ENCODE measurements at regions of chr9 and their contacts with region 1.

Region 1: DNA sequence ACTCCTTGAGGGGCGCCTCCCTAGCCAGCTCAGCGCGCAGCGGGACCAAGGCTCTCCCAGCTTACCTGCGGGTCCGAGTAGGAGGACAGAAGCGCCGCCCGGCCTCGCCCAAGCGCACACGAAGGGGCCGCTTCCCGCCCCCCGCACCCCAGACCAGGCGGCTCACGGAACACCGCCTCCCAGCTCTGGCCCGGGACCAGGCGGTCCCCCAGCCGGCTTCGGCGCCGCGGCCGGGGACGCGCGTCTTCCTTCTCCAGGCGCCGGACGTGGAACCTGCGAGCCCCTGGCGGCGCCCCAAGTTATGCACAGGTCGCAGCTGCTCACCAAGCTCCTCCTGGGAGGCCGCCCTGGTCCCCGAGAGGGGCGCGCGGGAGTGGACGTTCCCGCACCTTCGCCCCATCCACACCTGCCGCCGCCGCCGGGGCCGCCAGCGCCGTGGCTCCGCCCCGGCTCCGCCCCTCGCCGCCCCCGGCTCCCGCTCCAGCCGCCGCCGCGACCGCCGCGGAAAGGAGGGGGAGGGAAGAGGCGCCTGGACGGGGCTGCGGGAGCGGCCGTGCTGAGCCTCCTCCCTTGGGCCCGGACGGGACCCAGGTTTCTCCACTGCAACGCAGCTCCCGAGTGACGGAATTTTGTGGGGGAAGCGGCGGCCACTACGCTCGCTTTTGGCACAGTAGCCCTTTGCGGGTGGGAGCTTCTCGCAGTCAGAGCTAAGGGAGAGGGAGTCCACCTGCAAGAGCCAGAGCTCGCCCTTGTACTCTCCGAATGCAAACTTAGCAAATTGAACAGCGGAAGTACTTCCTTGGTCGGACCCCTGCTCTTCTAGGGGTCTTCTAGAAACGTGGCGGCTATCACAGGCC is 77.5 kb upstream of the IFNE start:
- DNase-seq: peak; percentile 15 to 74 (median 56)
- ATAC-seq: peak; percentile 82
- H3K4me3 ChIP-seq: peak overlapping the region; percentile 57 to 78
- H3K4me3 Mint-ChIP-seq: peak overlapping the region; percentile 98
- H3K27ac ChIP-seq: peak overlapping the region in 1 of 2 experiments; percentile 33
- H3K27ac Mint-ChIP-seq: peak overlapping the region; percentile 73
- H3K4me1 ChIP-seq: peaks cover 22% of the 10 kb centered on the region
- H3K4me1 Mint-ChIP-seq: peaks cover 40% of the 10 kb centered on the region
- H3K27me3 ChIP-seq: peaks cover 0 to 24% of the 10 kb centered on the region in 2 experiments
- H3K27me3 Mint-ChIP-seq: peaks cover 17% of the 10 kb centered on the region
- CTCF ChIP-seq: peak; percentile 19

Region 2: GRCh38 chr9:21096172-21096900 is 463.3 kb before region 1 on chr9:
- CTCF ChIA-PET with region 1: no interaction called
- POLR2A ChIA-PET with region 1: no interaction called
- intact Hi-C with region 1: loop called in 1 of 2 experiments (anchors 10 kb)
- DNase-seq: peak in 5 of 9 experiments; percentile 13 to 90 (median 48)
- ATAC-seq: peak; percentile 97
- H3K4me3 ChIP-seq: peak overlapping the region; percentile 16 to 36
- H3K4me3 Mint-ChIP-seq: peak overlapping the region; percentile 74
- H3K27ac ChIP-seq: peak overlapping the region in 1 of 2 experiments; percentile 84
- H3K27ac Mint-ChIP-seq: peak overlapping the region; percentile 83
- H3K4me1 ChIP-seq: peaks cover 15% of the 10 kb centered on the region
- H3K4me1 Mint-ChIP-seq: peaks cover 36% of the 10 kb centered on the region
- H3K27me3 ChIP-seq: no peaks in the 10 kb centered on the region
- H3K27me3 Mint-ChIP-seq: no peaks in the 10 kb centered on the region
- CTCF ChIP-seq: no peak

Region 3: GRCh38 chr9:21381448-21382339 is 178.0 kb before region 1 on chr9:
- CTCF ChIA-PET with region 1: no interaction called
- POLR2A ChIA-PET with region 1: no interaction called
- intact Hi-C with region 1: no loop called
- DNase-seq: peak in 2 of 9 experiments; percentile 36 to 60
- ATAC-seq: peak; percentile 76
- H3K4me3 ChIP-seq: no peak overlapping the region
- H3K4me3 Mint-ChIP-seq: peak overlapping the region; percentile 27
- H3K27ac ChIP-seq: no peak overlapping the region
- H3K27ac Mint-ChIP-seq: no peak overlapping the region
- H3K4me1 ChIP-seq: no peaks in the 10 kb centered on the region
- H3K4me1 Mint-ChIP-seq: peaks cover 7% of the 10 kb centered on the region
- H3K27me3 ChIP-seq: no peaks in the 10 kb centered on the region
- H3K27me3 Mint-ChIP-seq: peaks cover 39% of the 10 kb centered on the region
- CTCF ChIP-seq: no peak

Region 4: DNA sequence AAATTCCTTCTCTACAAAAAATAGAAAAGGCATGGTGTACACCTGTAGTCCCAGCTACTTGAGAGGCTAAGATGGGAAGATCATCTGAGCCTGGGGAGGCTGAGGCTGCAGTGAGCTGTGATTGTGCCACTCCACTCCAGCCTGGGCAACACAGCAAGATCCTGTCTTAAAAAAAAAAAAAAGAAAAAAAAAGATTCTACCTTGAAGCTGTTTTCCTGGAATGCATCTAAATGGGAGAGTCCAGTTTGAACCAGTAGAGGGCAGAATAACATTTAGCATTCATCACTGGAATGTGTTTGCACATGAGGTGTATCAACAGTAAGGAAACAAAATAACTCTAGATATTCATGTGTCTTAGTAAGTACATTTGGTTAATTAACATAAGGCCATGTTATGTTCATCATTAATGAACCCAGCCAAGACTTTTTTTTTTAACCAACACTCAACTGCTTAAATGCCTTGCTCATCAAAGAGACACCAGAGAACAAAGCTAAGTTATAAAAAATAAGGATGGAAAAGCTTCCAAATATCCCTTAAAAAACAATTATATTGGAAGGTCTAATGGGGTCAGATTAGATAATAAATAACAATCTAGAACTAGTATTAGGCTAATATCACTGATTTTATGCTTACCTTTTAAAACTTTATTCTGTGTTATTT is 93.7 kb before region 1 on chr9:
- CTCF ChIA-PET with region 1: no interaction called
- POLR2A ChIA-PET with region 1: no interaction called
- intact Hi-C with region 1: loop called in 1 of 2 experiments (anchors 2 kb)
- DNase-seq: peak in 2 of 9 experiments; percentile 68 to 75
- ATAC-seq: peak; percentile 77
- H3K4me3 ChIP-seq: no peak overlapping the region
- H3K4me3 Mint-ChIP-seq: no peak overlapping the region
- H3K27ac ChIP-seq: no peak overlapping the region
- H3K27ac Mint-ChIP-seq: no peak overlapping the region
- H3K4me1 ChIP-seq: no peaks in the 10 kb centered on the region
- H3K4me1 Mint-ChIP-seq: peaks cover 2% of the 10 kb centered on the region
- H3K27me3 ChIP-seq: no peaks in the 10 kb centered on the region
- H3K27me3 Mint-ChIP-seq: no peaks in the 10 kb centered on the region
- CTCF ChIP-seq: peak; percentile 71

Region 5: GRCh38 chr9:21570643-21571275 is 11.1 kb after region 1 on chr9:
- CTCF ChIA-PET with region 1: interaction called, 22 read pairs
- POLR2A ChIA-PET with region 1: interaction called, 13 read pairs
- intact Hi-C with region 1: loop called in 1 of 2 experiments (anchors 1 kb)
- DNase-seq: no peak
- ATAC-seq: no peak
- H3K4me3 ChIP-seq: no peak overlapping the region
- H3K4me3 Mint-ChIP-seq: no peak overlapping the region
- H3K27ac ChIP-seq: no peak overlapping the region
- H3K27ac Mint-ChIP-seq: no peak overlapping the region
- H3K4me1 ChIP-seq: no peaks in the 10 kb centered on the region
- H3K4me1 Mint-ChIP-seq: peaks cover 4% of the 10 kb centered on the region
- H3K27me3 ChIP-seq: peaks cover 0 to 2% of the 10 kb centered on the region in 2 experiments
- H3K27me3 Mint-ChIP-seq: no peaks in the 10 kb centered on the region
- CTCF ChIP-seq: no peak

Region 6: GRCh38 chr9:21591221-21592062 is 31.8 kb after region 1 on chr9:
- CTCF ChIA-PET with region 1: no interaction called
- POLR2A ChIA-PET with region 1: no interaction called
- intact Hi-C with region 1: loop called in 1 of 2 experiments (anchors 5 kb)
- DNase-seq: peak in 4 of 9 experiments; percentile 13 to 29 (median 24)
- ATAC-seq: no peak
- H3K4me3 ChIP-seq: no peak overlapping the region
- H3K4me3 Mint-ChIP-seq: no peak overlapping the region
- H3K27ac ChIP-seq: no peak overlapping the region
- H3K27ac Mint-ChIP-seq: no peak overlapping the region
- H3K4me1 ChIP-seq: peaks cover 5% of the 10 kb centered on the region
- H3K4me1 Mint-ChIP-seq: peaks cover 10% of the 10 kb centered on the region
- H3K27me3 ChIP-seq: no peaks in the 10 kb centered on the region
- H3K27me3 Mint-ChIP-seq: no peaks in the 10 kb centered on the region
- CTCF ChIP-seq: no peak

Region 7: DNA sequence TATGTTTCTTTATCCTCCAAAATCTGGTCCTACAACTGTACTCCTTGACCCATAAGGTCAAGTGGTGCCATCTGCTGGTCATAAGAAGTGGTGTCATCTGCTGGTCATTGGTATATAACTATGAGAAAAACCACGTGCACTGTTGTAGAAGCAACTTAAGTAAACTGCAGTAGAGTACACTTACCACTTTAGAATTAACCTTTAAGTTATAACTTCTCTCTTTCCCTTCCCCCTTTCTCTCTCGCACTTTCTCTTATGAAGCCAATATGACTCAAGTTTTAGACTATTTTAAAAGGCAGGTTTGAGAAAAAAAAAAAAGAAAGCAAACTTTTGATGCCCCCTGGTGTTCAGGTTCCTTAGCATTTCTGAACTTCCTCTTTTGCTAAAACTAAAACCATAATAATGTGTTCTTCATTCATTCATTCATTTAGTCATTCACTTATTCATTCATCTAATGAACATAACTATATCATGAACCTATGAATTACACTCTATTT is 229.9 kb after region 1 on chr9:
- CTCF ChIA-PET with region 1: interaction called, 6 read pairs
- POLR2A ChIA-PET with region 1: no interaction called
- intact Hi-C with region 1: loop called in 1 of 2 experiments (anchors 5 kb)
- DNase-seq: peak in 6 of 9 experiments; percentile 46 to 89 (median 62)
- ATAC-seq: peak; percentile 94
- H3K4me3 ChIP-seq: peak overlapping the region; percentile 18 to 33
- H3K4me3 Mint-ChIP-seq: peak overlapping the region; percentile 80
- H3K27ac ChIP-seq: no peak overlapping the region
- H3K27ac Mint-ChIP-seq: peak overlapping the region; percentile 71
- H3K4me1 ChIP-seq: no peaks in the 10 kb centered on the region
- H3K4me1 Mint-ChIP-seq: no peaks in the 10 kb centered on the region
- H3K27me3 ChIP-seq: no peaks in the 10 kb centered on the region
- H3K27me3 Mint-ChIP-seq: peaks cover 8% of the 10 kb centered on the region
- CTCF ChIP-seq: peak; percentile 86

Region 8: DNA sequence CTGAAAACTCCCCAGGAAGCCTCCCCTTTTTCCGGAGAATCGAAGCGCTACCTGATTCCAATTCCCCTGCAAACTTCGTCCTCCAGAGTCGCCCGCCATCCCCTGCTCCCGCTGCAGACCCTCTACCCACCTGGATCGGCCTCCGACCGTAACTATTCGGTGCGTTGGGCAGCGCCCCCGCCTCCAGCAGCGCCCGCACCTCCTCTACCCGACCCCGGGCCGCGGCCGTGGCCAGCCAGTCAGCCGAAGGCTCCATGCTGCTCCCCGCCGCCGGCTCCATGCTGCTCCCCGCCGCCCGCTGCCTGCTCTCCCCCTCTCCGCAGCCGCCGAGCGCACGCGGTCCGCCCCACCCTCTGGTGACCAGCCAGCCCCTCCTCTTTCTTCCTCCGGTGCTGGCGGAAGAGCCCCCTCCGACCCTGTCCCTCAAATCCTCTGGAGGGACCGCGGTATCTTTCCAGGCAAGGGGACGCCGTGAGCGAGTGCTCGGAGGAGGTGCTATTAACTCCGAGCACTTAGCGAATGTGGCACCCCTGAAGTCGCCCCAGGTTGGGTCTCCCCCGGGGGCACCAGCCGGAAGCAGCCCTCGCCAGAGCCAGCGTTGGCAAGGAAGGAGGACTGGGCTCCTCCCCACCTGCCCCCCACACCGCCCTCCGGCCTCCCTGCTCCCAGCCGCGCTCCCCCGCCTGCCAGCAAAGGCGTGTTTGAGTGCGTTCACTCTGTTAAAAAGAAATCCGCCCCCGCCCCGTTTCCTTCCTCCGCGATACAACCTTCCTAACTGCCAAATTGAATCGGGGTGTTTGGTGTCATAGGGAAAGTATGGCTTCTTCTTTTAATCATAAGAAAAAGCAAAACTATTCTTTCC is 415.1 kb after region 1 on chr9:
- CTCF ChIA-PET with region 1: no interaction called
- POLR2A ChIA-PET with region 1: no interaction called
- intact Hi-C with region 1: loop called in 1 of 2 experiments (anchors 10 kb)
- DNase-seq: peak in 6 of 9 experiments; percentile 20 to 58 (median 30)
- ATAC-seq: peak; percentile 70
- H3K4me3 ChIP-seq: peak overlapping the region; percentile 25 to 42
- H3K4me3 Mint-ChIP-seq: peak overlapping the region; percentile 74
- H3K27ac ChIP-seq: no peak overlapping the region
- H3K27ac Mint-ChIP-seq: no peak overlapping the region
- H3K4me1 ChIP-seq: peaks cover 15% of the 10 kb centered on the region
- H3K4me1 Mint-ChIP-seq: peaks cover 18% of the 10 kb centered on the region
- H3K27me3 ChIP-seq: peaks cover 69 to 87% of the 10 kb centered on the region in 2 experiments
- H3K27me3 Mint-ChIP-seq: peaks cover 86% of the 10 kb centered on the region
- CTCF ChIP-seq: no peak

Region 9: GRCh38 chr9:22274477-22274876 is 714.8 kb after region 1 on chr9:
- CTCF ChIA-PET with region 1: no interaction called
- POLR2A ChIA-PET with region 1: no interaction called
- intact Hi-C with region 1: no loop called
- DNase-seq: no peak
- ATAC-seq: no peak
- H3K4me3 ChIP-seq: no peak overlapping the region
- H3K4me3 Mint-ChIP-seq: no peak overlapping the region
- H3K27ac ChIP-seq: no peak overlapping the region
- H3K27ac Mint-ChIP-seq: no peak overlapping the region
- H3K4me1 ChIP-seq: no peaks in the 10 kb centered on the region
- H3K4me1 Mint-ChIP-seq: no peaks in the 10 kb centered on the region
- H3K27me3 ChIP-seq: no peaks in the 10 kb centered on the region
- H3K27me3 Mint-ChIP-seq: peaks cover 10% of the 10 kb centered on the region
- CTCF ChIP-seq: no peak

Measured in CD8-positive, alpha-beta T cell (primary cell).